Mammary epithelial cell (primary cell): ENCODE measurements at regions of chr10 and their contacts with region 1.

Region 1: GRCh38 chr10:96395931-96396877 is 37.4 kb upstream of the OPALIN start:
- DNase-seq: peak; percentile 43
- H3K4me3 ChIP-seq: no peak overlapping the region
- H3K27ac ChIP-seq: no peak overlapping the region
- H3K4me1 ChIP-seq: no peaks in the 10 kb centered on the region
- H3K27me3 ChIP-seq: peaks cover 7% of the 10 kb centered on the region
- CTCF ChIP-seq: peak; percentile 72 to 87

Region 2: DNA sequence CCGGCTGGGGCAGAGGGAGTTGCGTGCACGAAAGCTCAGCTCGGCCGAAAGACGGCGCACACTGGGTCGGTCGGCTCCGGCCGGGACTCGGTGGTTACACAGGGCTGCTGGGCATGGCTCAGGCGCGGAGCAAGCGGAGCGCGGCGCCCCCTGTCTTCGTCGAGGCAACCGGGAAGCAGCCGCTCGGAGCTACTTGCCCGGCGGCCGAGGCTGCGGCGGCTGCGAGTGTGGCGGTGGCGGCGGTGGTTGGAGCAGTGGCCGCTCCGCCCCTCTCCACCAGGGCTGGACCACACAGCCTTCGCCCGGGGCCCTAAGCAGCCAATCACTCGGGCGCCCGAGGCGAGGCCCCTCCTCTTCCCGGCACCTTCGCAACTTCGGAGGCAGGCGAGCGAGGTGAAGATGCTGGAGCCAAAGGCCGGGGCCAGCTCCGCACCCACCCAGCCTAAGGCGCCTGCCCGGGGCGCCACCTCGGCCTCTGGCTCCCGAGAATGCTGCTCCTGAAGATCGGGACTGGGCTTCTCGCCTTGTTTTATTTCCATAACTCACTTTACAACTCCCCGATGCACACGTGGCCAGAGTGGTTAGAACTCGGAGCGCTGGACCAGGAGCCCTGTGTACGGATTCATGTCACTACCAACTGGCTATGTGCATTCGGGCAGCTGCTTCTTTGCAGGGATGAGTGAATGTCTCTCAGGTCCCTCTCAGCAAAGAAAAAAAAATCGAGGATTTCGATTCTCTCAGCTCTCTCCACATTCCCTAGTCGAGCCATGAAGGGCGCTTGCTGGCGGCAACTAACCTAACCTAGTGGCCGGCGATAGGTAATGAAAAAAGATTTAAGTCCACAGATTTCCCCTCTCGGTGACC is 117.7 kb after region 1 on chr10 and contains the start of gene TLL2:
- CTCF ChIA-PET with region 1: no interaction called
- dilution Hi-C with region 1: no loop called
- in situ Hi-C with region 1: no loop called
- intact Hi-C with region 1: loop called (anchors 1 kb)
- DNase-seq: peak; percentile 91
- H3K4me3 ChIP-seq: peak within 1 kb of the TSS; percentile 35 to 65 (median 54)
- H3K27ac ChIP-seq: no peak within 1 kb of the TSS
- H3K4me1 ChIP-seq: peaks cover 28% of the 10 kb centered on the region
- H3K27me3 ChIP-seq: no peaks in the 10 kb centered on the region
- CTCF ChIP-seq: peak; percentile 15 to 74
- total RNA-seq, gene TLL2: 0.17 to 0.59 TPM

Region 3: GRCh38 chr10:96556003-96556402 is 159.8 kb after region 1 on chr10:
- CTCF ChIA-PET with region 1: no interaction called
- dilution Hi-C with region 1: no loop called
- in situ Hi-C with region 1: no loop called
- intact Hi-C with region 1: loop called (anchors 2 kb)
- DNase-seq: no peak
- H3K4me3 ChIP-seq: no peak overlapping the region
- H3K27ac ChIP-seq: no peak overlapping the region
- H3K4me1 ChIP-seq: no peaks in the 10 kb centered on the region
- H3K27me3 ChIP-seq: no peaks in the 10 kb centered on the region
- CTCF ChIP-seq: peak; percentile 21 to 48

Region 4: GRCh38 chr10:96642973-96643372 is 246.8 kb after region 1 on chr10:
- CTCF ChIA-PET with region 1: interaction called, 3 read pairs
- dilution Hi-C with region 1: no loop called
- in situ Hi-C with region 1: no loop called
- intact Hi-C with region 1: loop called (anchors 5 kb)
- DNase-seq: no peak
- H3K4me3 ChIP-seq: no peak overlapping the region
- H3K27ac ChIP-seq: no peak overlapping the region
- H3K4me1 ChIP-seq: no peaks in the 10 kb centered on the region
- H3K27me3 ChIP-seq: no peaks in the 10 kb centered on the region
- CTCF ChIP-seq: peak; percentile 39 to 53

Region 5: DNA sequence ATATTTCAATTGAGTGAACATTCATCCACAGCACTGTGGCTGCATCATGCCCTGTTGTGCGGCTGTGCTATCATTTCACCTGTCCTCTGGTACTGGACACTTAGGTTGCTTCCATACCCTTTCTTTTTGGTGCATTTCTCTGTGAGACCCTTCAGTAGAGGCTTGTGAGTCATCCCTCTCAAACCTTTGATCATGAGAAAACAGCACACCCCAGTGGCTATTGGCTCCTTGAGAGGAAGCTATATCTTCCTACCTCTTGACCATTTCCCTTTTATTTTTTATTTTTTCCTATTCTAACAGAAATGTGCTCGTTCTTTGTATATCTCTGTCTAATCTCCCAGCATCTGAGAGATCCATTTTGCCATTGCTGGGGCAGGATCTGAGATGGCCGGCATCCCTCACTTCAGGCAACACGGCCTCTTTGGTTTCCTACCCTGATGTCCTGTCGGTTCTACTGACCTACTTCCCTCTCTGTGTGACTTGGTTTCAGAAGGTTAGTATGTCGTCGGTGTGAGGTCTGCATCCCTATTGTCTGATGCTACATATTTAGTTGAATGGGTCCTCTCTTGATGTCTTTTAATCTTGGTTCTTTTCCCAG is 347.9 kb after region 1 on chr10:
- CTCF ChIA-PET with region 1: no interaction called
- dilution Hi-C with region 1: no loop called
- in situ Hi-C with region 1: no loop called
- intact Hi-C with region 1: loop called (anchors 10 kb)
- DNase-seq: no peak
- H3K4me3 ChIP-seq: no peak overlapping the region
- H3K27ac ChIP-seq: no peak overlapping the region
- H3K4me1 ChIP-seq: no peaks in the 10 kb centered on the region
- H3K27me3 ChIP-seq: no peaks in the 10 kb centered on the region
- CTCF ChIP-seq: peak in 1 of 2 donors; percentile 23

Region 6: GRCh38 chr10:97025613-97026242 is 629.5 kb after region 1 on chr10:
- CTCF ChIA-PET with region 1: no interaction called
- dilution Hi-C with region 1: no loop called
- in situ Hi-C with region 1: no loop called
- intact Hi-C with region 1: loop called (anchors 2 kb)
- DNase-seq: peak; percentile 20
- H3K4me3 ChIP-seq: no peak overlapping the region
- H3K27ac ChIP-seq: no peak overlapping the region
- H3K4me1 ChIP-seq: no peaks in the 10 kb centered on the region
- H3K27me3 ChIP-seq: peaks cover 1% of the 10 kb centered on the region
- CTCF ChIP-seq: peak; percentile 55 to 70

Region 7: GRCh38 chr10:97234400-97234799 is 838.2 kb after region 1 on chr10:
- CTCF ChIA-PET with region 1: no interaction called
- dilution Hi-C with region 1: no loop called
- in situ Hi-C with region 1: no loop called
- intact Hi-C with region 1: loop called (anchors 2 kb)
- DNase-seq: peak; percentile 19
- H3K4me3 ChIP-seq: no peak overlapping the region
- H3K27ac ChIP-seq: no peak overlapping the region
- H3K4me1 ChIP-seq: no peaks in the 10 kb centered on the region
- H3K27me3 ChIP-seq: no peaks in the 10 kb centered on the region
- CTCF ChIP-seq: peak; percentile 50 to 57